Naive thymus-derived CD4-positive, alpha-beta T cell (primary cell): ENCODE measurements at regions of chr21 and their contacts with region 1.

Region 1: DNA sequence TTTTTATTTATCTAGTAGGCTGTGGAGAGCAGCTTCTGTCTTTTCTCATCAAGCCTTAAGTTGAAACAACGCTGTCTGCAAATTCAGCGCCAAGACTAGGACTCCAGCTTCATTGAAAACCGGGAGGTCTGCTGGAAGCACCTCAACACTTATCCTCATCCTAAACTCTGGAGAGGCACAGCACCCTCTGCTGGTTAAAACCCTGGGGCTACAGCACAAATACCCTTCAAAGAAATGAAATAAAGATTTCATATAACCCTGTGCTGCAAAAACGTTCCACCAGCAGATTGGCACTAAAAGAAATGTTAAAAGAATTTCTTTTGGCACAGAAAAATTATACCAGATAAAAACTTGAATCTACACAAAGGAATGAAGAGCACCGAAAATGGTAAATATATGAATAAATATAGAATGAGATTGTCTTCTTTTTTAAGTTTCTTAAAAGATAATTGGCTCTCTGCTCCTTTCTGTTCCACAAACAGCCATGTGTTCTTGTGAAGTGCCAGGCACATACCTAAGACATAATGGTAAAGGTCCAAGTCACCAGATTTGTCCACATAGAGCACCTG is 227.7 kb upstream of the SAMSN1 start:
- DNase-seq: peak in 8 of 9 donors; percentile 8 to 57 (median 37)
- ATAC-seq: peak; percentile 74
- H3K4me3 ChIP-seq: no peak overlapping the region
- H3K4me3 Mint-ChIP-seq: no peak overlapping the region
- H3K27ac ChIP-seq: no peak overlapping the region
- H3K27ac Mint-ChIP-seq: no peak overlapping the region
- H3K4me1 ChIP-seq: no peaks in the 10 kb centered on the region
- H3K4me1 Mint-ChIP-seq: peaks cover 0 to 6% (median 0%) of the 10 kb centered on the region in 7 donors
- H3K27me3 ChIP-seq: peaks cover 0 to 3% of the 10 kb centered on the region in 2 donors
- H3K27me3 Mint-ChIP-seq: peaks cover 0 to 11% (median 0%) of the 10 kb centered on the region in 5 donors

Region 2: DNA sequence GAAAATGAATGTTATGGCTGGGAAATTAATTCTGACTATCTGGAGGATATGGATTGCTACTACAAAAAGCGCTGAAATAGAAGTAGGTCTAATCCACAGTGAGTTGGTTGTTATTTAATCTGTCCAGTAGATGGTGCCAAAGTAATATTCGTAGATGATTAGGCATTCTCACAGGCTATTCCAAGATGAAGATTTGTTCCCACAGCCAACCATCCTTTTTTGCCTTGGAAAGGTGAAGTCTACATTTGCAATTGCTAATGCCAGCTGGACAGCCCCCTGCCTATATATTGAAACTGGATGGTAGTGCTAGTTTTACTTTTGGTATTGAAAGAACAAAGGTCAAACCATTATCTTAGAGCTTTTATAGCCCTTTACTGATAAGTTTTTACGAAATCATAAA is 514.1 kb before region 1 on chr21:
- CTCF ChIA-PET with region 1: no interaction called
- POLR2A ChIA-PET with region 1: no interaction called
- intact Hi-C with region 1: loop called in 1 of 2 experiments (anchors 1 kb)
- DNase-seq: peak in 5 of 9 donors; percentile 13 to 28 (median 23)
- ATAC-seq: peak; percentile 59
- H3K4me3 ChIP-seq: no peak overlapping the region
- H3K4me3 Mint-ChIP-seq: no peak overlapping the region
- H3K27ac ChIP-seq: no peak overlapping the region
- H3K27ac Mint-ChIP-seq: no peak overlapping the region
- H3K4me1 ChIP-seq: no peaks in the 10 kb centered on the region
- H3K4me1 Mint-ChIP-seq: no peaks in the 10 kb centered on the region
- H3K27me3 ChIP-seq: no peaks in the 10 kb centered on the region
- H3K27me3 Mint-ChIP-seq: peaks cover 2 to 19% (median 12%) of the 10 kb centered on the region in 5 donors

Region 3: GRCh38 chr21:14403681-14404318 is 370.1 kb before region 1 on chr21:
- CTCF ChIA-PET with region 1: interaction called, 4 read pairs
- POLR2A ChIA-PET with region 1: no interaction called
- intact Hi-C with region 1: loop called (anchors 1 kb)
- DNase-seq: peak in 5 of 9 donors; percentile 19 to 55 (median 39)
- ATAC-seq: peak; percentile 79
- H3K4me3 ChIP-seq: no peak overlapping the region
- H3K4me3 Mint-ChIP-seq: no peak overlapping the region
- H3K27ac ChIP-seq: no peak overlapping the region
- H3K27ac Mint-ChIP-seq: no peak overlapping the region
- H3K4me1 ChIP-seq: no peaks in the 10 kb centered on the region
- H3K4me1 Mint-ChIP-seq: no peaks in the 10 kb centered on the region
- H3K27me3 ChIP-seq: no peaks in the 10 kb centered on the region
- H3K27me3 Mint-ChIP-seq: peaks cover 0 to 1% (median 0%) of the 10 kb centered on the region in 5 donors

Region 4: DNA sequence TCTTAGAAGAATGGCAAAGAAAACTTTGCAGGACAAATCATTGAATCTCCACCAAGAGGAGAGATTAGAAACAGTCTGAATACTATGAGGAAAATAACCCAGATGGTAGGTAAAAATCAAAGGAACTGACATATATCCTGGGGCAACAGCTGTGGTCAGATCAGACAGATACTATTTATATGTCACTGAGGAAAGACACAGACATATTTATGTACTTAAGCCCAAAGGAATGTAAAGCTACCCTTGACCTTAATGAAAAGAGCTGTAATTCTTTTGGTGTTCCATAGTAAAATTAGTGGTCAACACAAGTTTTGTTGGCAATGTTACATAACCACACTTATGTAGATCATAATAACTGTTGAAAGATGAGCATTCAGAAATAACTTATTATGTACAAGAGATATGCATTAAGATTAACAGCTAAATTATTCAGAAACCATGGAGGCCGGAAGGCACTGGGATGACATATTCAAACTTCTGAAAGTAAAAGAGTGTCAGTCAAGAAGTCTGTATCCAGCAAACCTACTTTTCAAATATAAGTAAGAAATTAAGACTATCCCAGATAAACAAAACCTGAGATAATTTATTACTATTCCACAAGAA is 61.6 kb before region 1 on chr21:
- CTCF ChIA-PET with region 1: no interaction called
- POLR2A ChIA-PET with region 1: no interaction called
- intact Hi-C with region 1: no loop called
- DNase-seq: no peak
- ATAC-seq: no peak
- H3K4me3 ChIP-seq: no peak overlapping the region
- H3K4me3 Mint-ChIP-seq: no peak overlapping the region
- H3K27ac ChIP-seq: no peak overlapping the region
- H3K27ac Mint-ChIP-seq: no peak overlapping the region
- H3K4me1 ChIP-seq: no peaks in the 10 kb centered on the region
- H3K4me1 Mint-ChIP-seq: peaks cover 0 to 11% (median 0%) of the 10 kb centered on the region in 7 donors
- H3K27me3 ChIP-seq: no peaks in the 10 kb centered on the region
- H3K27me3 Mint-ChIP-seq: no peaks in the 10 kb centered on the region